Lower lobe of right lung (tissue), 2 donors: ENCODE measurements at regions of chr1 and their contacts with region 1.

Region 1: DNA sequence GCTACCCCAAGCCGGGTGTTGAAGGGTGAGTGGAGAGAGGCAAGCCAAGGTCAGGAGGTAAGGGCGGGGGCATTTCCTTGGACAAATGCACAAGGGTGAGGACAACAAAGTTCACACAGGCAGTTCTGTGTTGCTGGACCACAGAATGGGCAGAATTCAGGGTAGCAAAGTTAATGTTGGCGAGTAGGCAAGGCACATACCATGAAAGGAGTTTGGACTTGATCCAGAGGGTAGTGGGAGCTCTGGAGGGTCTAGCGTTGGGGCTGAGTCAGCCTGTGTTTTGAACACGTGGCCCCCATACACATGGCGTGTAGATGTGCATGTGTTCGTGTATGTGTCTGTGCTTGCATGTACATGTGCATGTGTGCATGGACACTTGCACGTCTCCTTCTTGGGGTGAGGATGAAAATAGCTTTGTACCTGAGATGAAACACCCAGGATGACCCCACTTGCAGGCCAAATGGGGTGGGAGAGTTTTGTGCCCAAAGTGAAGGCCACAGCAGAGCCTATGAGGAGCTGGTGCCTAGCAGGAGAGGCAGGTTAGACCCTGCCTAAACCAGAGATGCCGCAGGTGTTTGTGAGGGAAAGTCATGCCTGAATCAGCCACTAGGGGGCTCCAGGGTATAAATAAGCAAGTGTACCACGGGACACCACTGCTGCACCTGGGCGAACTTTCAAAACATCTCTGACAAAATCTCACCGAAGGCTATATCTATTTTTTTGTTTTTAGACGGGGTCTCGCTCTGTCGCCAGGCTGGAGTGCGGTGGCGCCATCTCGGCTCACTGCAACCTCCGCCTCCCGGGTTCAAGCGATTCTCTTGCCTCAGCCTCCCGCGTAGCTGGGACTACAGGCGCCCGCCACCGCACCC is 21.8 kb downstream of the SLC27A3 start:
- DNase-seq: peak; percentile 79
- ATAC-seq: peak; percentile 75 to 83
- H3K4me3 ChIP-seq: no peak overlapping the region
- H3K27ac ChIP-seq: no peak overlapping the region
- H3K4me1 ChIP-seq: no peaks in the 10 kb centered on the region
- H3K27me3 ChIP-seq: no peaks in the 10 kb centered on the region
- CTCF ChIP-seq: peak; percentile 91

Region 2: GRCh38 chr1:153375511-153375910 is 421.5 kb before region 1 on chr1 and contains the start of gene S100A12:
- intact Hi-C with region 1: no loop called
- DNase-seq: no peak
- ATAC-seq: peak; percentile 87 to 91
- H3K4me3 ChIP-seq: no peak within 1 kb of the TSS
- H3K27ac ChIP-seq: peak within 1 kb of the TSS; percentile 36
- H3K4me1 ChIP-seq: peaks cover 10% of the 10 kb centered on the region
- H3K27me3 ChIP-seq: no peaks in the 10 kb centered on the region
- CTCF ChIP-seq: no peak
- total RNA-seq, gene S100A12: 54.9 TPM

Region 3: GRCh38 chr1:153985941-153986761 is 189.1 kb after region 1 on chr1 and contains the start of gene RAB13:
- intact Hi-C with region 1: loop called (anchors 10 kb)
- DNase-seq: peak; percentile 88
- ATAC-seq: peak; percentile 88 to 90
- H3K4me3 ChIP-seq: peak within 1 kb of the TSS; percentile 71
- H3K27ac ChIP-seq: peak within 1 kb of the TSS; percentile 85
- H3K4me1 ChIP-seq: peaks cover 31% of the 10 kb centered on the region
- H3K27me3 ChIP-seq: no peaks in the 10 kb centered on the region
- CTCF ChIP-seq: no peak
- total RNA-seq, gene RAB13: 103 TPM